Panc1 (cell line): ENCODE measurements at regions of chr10 and their contacts with region 1.

Region 1: GRCh38 chr10:13608246-13608853 is 21.6 kb downstream of the PRPF18 start:
- DNase-seq: no peak
- ATAC-seq: no peak
- H3K4me3 ChIP-seq: no peak overlapping the region
- H3K27ac ChIP-seq: no peak overlapping the region
- H3K4me1 ChIP-seq: no peaks in the 10 kb centered on the region
- H3K27me3 ChIP-seq: no peaks in the 10 kb centered on the region
- CTCF ChIP-seq: no peak

Region 2: GRCh38 chr10:13518076-13518692 is 90.2 kb before region 1 on chr10:
- CTCF ChIA-PET with region 1: no interaction called
- POLR2A ChIA-PET with region 1: interaction called, 14 read pairs
- in situ Hi-C with region 1: no loop called
- intact Hi-C with region 1: no loop called
- DNase-seq: peak; percentile 2
- ATAC-seq: no peak
- H3K4me3 ChIP-seq: no peak overlapping the region
- H3K27ac ChIP-seq: no peak overlapping the region
- H3K4me1 ChIP-seq: no peaks in the 10 kb centered on the region
- H3K27me3 ChIP-seq: no peaks in the 10 kb centered on the region
- CTCF ChIP-seq: peak; percentile 62

Region 3: DNA sequence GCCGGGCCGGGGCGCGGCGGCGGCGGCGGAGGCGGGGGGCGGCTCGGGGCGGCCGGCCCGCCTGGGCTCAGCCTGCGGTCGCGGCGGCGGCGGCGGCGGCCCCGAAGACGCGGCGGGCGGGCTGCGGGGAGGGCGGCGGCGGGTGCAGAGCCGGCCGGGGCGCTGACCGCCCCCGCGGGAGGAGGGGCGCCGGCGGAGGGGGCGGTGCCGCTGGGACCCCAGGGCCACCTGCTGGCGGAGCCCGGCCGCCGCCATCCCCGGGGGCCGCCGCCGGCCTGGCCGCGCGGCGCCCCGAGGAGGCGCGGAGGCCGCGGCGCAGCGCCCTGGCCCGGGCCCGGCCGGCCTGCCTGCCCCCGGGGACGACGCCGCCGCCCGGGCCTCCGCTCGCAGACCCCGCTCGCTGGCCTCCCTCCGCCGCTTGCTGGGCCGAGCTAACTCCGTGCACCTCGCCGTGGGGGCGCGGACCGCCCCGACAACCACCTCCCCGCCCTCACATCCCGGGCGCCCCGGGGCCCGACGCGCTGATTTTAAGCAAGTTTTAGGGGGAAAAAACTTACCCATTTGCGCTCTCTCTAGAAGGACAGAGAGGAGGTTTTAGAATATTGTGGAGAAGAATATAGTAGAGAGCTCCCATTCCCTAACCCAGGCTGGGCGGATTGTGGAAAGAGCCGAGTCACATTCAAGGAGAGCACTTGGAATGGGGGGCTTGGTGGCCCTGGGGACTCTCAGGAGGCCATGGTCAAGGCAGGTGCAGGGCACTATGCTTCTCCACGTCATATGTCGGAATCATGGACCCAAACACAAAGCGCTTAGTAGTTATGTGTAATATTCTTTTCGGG is 79.3 kb before region 1 on chr10 and contains the start of gene BEND7:
- CTCF ChIA-PET with region 1: no interaction called
- POLR2A ChIA-PET with region 1: no interaction called
- in situ Hi-C with region 1: no loop called
- intact Hi-C with region 1: no loop called
- DNase-seq: no peak
- ATAC-seq: peak; percentile 90
- H3K4me3 ChIP-seq: peak within 1 kb of the TSS; percentile 38 to 43
- H3K27ac ChIP-seq: no peak within 1 kb of the TSS
- H3K4me1 ChIP-seq: no peaks in the 10 kb centered on the region
- H3K27me3 ChIP-seq: no peaks in the 10 kb centered on the region; the same call in 1 of the 2 replicates
- CTCF ChIP-seq: no peak
- total RNA-seq, gene BEND7: 7.6 TPM